Aorta (tissue), 5 donors: ENCODE measurements at regions of chr7 and their contacts with region 1.

Region 1: GRCh38 chr7:137454246-137454724 is 110.8 kb upstream of the PTN start:
- DNase-seq: no peak
- ATAC-seq: peak; percentile 82
- H3K4me3 ChIP-seq: no peak overlapping the region
- H3K27ac ChIP-seq: no peak overlapping the region
- H3K4me1 ChIP-seq: no peaks in the 10 kb centered on the region
- H3K27me3 ChIP-seq: no peaks in the 10 kb centered on the region

Region 2: DNA sequence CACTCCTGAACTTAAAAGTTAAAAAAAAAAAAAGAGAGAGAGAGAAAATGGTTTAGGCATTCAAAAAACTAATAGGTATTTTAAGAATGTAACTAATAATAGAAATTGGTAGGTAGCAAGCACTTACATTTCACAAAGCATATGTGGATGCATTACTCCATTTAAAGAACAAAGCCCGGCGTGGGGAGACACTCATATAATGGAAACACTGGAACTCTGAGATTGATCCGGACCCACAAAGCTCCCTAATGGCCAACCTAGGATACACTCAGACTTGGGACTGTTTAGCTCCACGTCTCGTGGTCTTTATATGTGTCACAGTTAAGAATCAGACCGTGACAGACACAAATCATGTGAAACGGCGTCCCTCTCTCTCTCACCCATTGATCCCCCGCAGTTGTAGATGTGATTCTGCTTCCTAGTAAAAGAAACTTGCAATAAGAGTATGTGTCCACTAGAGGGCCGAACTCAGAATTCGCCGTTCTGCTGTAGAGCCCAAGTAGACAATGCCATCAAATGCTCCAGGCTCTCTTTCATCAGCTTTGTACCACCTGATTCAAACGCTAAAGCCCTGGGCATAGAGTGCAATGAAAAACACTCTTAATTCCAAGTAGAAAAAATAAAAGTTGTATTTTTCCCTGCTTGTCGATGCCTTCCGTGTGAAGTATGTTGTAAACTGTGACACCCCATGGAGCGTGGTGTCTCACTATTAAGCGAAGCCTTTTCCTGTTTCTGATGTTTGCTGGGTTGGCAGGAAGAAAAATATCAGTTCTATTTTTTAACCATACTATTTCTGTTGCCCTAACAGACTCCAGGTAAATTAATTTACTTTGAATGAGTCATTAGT is 1048.1 kb before region 1 on chr7:
- intact Hi-C with region 1: loop called in 1 of 2 experiments (anchors 10 kb)
- DNase-seq: no peak
- ATAC-seq: peak; percentile 65
- H3K4me3 ChIP-seq: no peak overlapping the region
- H3K27ac ChIP-seq: no peak overlapping the region
- H3K4me1 ChIP-seq: no peaks in the 10 kb centered on the region
- H3K27me3 ChIP-seq: no peaks in the 10 kb centered on the region

Region 3: GRCh38 chr7:137169282-137169698 is 285.0 kb before region 1 on chr7:
- intact Hi-C with region 1: loop called in 1 of 2 experiments (anchors 5 kb)
- DNase-seq: no peak
- ATAC-seq: peak; percentile 67
- H3K4me3 ChIP-seq: no peak overlapping the region
- H3K27ac ChIP-seq: no peak overlapping the region
- H3K4me1 ChIP-seq: no peaks in the 10 kb centered on the region
- H3K27me3 ChIP-seq: no peaks in the 10 kb centered on the region

Region 4: GRCh38 chr7:137545059-137545716 is 90.9 kb after region 1 on chr7:
- intact Hi-C with region 1: no loop called
- DNase-seq: no peak
- ATAC-seq: no peak
- H3K4me3 ChIP-seq: no peak overlapping the region
- H3K27ac ChIP-seq: no peak overlapping the region
- H3K4me1 ChIP-seq: no peaks in the 10 kb centered on the region
- H3K27me3 ChIP-seq: no peaks in the 10 kb centered on the region